ENCODE measurements at regions of chr10 and their contacts with region 1.

Region 1: DNA sequence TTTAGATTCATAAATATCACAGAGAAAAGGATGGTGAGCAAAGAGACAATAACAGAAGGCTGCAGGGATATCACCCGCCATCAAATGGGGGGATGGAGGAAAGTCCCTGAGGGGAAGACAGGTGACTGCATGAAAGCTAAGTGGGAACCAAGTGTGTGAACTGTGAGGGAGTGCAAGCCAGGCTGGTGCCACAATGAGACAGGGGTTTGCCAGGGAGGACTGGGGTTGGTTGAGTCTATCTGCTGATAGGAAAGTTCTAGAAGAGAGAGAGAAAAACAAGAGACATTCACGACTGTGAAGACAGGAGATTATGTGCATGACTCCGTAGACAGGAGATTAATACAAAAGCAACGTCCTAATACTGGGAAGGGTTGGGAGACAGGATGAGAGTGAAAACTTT is 376.4 kb downstream of the PARD3 start:
- DNase-seq: no peak
- ATAC-seq: no peak
- H3K4me3 ChIP-seq: no peak overlapping the region
- H3K27ac ChIP-seq: no peak overlapping the region
- H3K4me1 ChIP-seq: no peaks in the 10 kb centered on the region; a peak in 2 of 5 replicates
- H3K27me3 ChIP-seq: no peaks in the 10 kb centered on the region; a peak in 1 of 5 replicates
- CTCF ChIP-seq: no peak
- EP300 ChIP-seq: no peak
- POLR2A ChIP-seq: no peak
- RAD21 ChIP-seq: no peak

Region 2: GRCh38 chr10:34454590-34455261 is 16.0 kb after region 1 on chr10:
- CTCF ChIA-PET with region 1: interaction called, 10 read pairs
- POLR2A ChIA-PET with region 1: interaction called, 3 read pairs
- in situ Hi-C with region 1: no loop called
- intact Hi-C with region 1: no loop called
- DNase-seq: no peak
- ATAC-seq: no peak
- H3K4me3 ChIP-seq: no peak overlapping the region
- H3K27ac ChIP-seq: no peak overlapping the region
- H3K4me1 ChIP-seq: no peaks in the 10 kb centered on the region
- H3K27me3 ChIP-seq: no peaks in the 10 kb centered on the region
- CTCF ChIP-seq: no peak
- EP300 ChIP-seq: no peak
- POLR2A ChIP-seq: no peak
- RAD21 ChIP-seq: no peak

Region 3: GRCh38 chr10:34522546-34522945 is 83.8 kb after region 1 on chr10:
- CTCF ChIA-PET with region 1: no interaction called
- POLR2A ChIA-PET with region 1: no interaction called
- in situ Hi-C with region 1: no loop called
- intact Hi-C with region 1: no loop called
- DNase-seq: peak in 2 of 4 experiments; percentile 16 to 31
- ATAC-seq: peak; percentile 69
- H3K4me3 ChIP-seq: no peak overlapping the region
- H3K27ac ChIP-seq: no peak overlapping the region
- H3K4me1 ChIP-seq: no peaks in the 10 kb centered on the region
- H3K27me3 ChIP-seq: no peaks in the 10 kb centered on the region
- CTCF ChIP-seq: peak; percentile 38 to 65 (median 45); a peak in 5 of 6 replicates
- EP300 ChIP-seq: no peak
- POLR2A ChIP-seq: no peak
- RAD21 ChIP-seq: peak; percentile 44 to 46